AG04449 (cell line): ENCODE measurements at regions of chr9 and their contacts with region 1.

Region 1: DNA sequence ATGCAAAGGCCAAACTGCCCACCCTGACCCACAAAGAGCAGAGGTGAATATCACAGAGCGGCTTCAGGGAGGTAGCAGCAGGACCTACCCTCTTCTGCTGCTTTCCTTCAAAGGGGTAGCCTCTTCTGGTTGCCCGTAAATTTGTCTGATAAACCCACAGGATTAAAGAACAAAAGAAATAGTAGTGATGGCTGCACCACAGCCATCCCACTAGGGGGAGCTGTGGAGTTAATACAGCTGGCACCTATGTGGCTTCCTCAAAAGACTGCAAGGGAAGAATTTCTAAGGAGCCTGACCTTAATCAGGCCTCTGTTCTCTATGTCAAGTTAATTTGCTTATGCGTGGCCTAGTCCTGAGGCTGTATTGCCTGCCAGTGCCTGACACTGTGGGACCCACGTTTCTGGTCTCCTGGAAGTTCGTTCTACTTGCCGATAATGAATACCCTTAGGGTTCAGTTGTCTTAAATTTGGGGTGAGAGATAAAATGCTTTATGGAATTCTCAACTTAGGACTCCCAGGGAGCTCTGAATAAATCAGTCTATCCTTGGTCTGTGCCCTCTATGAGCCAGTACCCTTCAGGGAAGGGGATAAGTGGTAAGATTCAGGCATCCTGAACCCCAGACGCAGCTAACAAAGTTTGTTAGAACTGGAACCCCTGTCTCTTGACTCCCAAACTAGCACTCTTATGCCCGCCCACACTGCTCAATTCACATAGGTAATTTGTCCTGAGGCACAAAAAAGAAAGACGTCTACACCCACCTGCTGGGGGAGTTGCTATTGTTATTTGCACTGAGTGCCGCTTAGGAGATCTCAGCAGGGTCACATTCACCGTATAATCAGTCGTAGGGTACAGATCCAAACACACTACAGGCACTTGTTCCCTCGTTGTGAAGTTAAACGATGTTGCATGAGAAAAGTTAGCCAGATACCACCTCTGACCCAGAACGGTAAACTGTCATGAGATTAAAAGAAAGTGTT is 77.1 kb downstream of the SUSD1 start:
- DNase-seq: no peak
- H3K4me3 ChIP-seq: no peak overlapping the region
- CTCF ChIP-seq: peak; percentile 74

Region 2: GRCh38 chr9:112086627-112087026 is 11.4 kb before region 1 on chr9:
- CTCF ChIA-PET with region 1: interaction called, 69 read pairs
- POLR2A ChIA-PET with region 1: no interaction called
- DNase-seq: no peak
- H3K4me3 ChIP-seq: no peak overlapping the region
- CTCF ChIP-seq: peak; percentile 34

Region 3: GRCh38 chr9:112334432-112334841 is 236.4 kb after region 1 on chr9:
- CTCF ChIA-PET with region 1: interaction called, 14 read pairs
- POLR2A ChIA-PET with region 1: no interaction called
- DNase-seq: no peak
- H3K4me3 ChIP-seq: peak overlapping the region; percentile 72
- CTCF ChIP-seq: no peak

Region 4: GRCh38 chr9:112371060-112371459 is 273.1 kb after region 1 on chr9:
- CTCF ChIA-PET with region 1: interaction called, 10 read pairs
- POLR2A ChIA-PET with region 1: no interaction called
- DNase-seq: no peak
- H3K4me3 ChIP-seq: no peak overlapping the region
- CTCF ChIP-seq: no peak

Region 5: GRCh38 chr9:112711050-112711689 is 613.2 kb after region 1 on chr9:
- CTCF ChIA-PET with region 1: interaction called, 18 read pairs
- POLR2A ChIA-PET with region 1: no interaction called
- DNase-seq: no peak
- H3K4me3 ChIP-seq: no peak overlapping the region
- CTCF ChIP-seq: peak; percentile 57